CD4-positive, alpha-beta T cell (primary cell): ENCODE measurements at regions of chr11 and their contacts with region 1.

Region 1: GRCh38 chr11:76288166-76288980 is 82.1 kb upstream of the WNT11 start:
- DNase-seq: peak in 12 of 14 experiments; percentile 3 to 53 (median 22)
- ATAC-seq: peak; percentile 80
- H3K4me3 ChIP-seq: peak overlapping the region; percentile 7
- H3K4me3 Mint-ChIP-seq: peak overlapping the region; percentile 75
- H3K27ac ChIP-seq: peak overlapping the region; percentile 60 to 81
- H3K27ac Mint-ChIP-seq: peak overlapping the region; percentile 91
- H3K4me1 ChIP-seq: peaks cover 37% of the 10 kb centered on the region
- H3K4me1 Mint-ChIP-seq: peaks cover 41% of the 10 kb centered on the region
- H3K27me3 ChIP-seq: no peaks in the 10 kb centered on the region
- H3K27me3 Mint-ChIP-seq: no peaks in the 10 kb centered on the region
- CTCF ChIP-seq: no peak

Region 2: GRCh38 chr11:75873417-75874221 is 414.8 kb before region 1 on chr11:
- CTCF ChIA-PET with region 1: no interaction called
- POLR2A ChIA-PET with region 1: no interaction called
- intact Hi-C with region 1: no loop called
- DNase-seq: peak in 1 of 14 experiments; percentile 14
- ATAC-seq: no peak
- H3K4me3 ChIP-seq: no peak overlapping the region
- H3K4me3 Mint-ChIP-seq: no peak overlapping the region
- H3K27ac ChIP-seq: no peak overlapping the region
- H3K27ac Mint-ChIP-seq: no peak overlapping the region
- H3K4me1 ChIP-seq: peaks cover 3% of the 10 kb centered on the region
- H3K4me1 Mint-ChIP-seq: peaks cover 14% of the 10 kb centered on the region
- H3K27me3 ChIP-seq: no peaks in the 10 kb centered on the region
- H3K27me3 Mint-ChIP-seq: no peaks in the 10 kb centered on the region
- CTCF ChIP-seq: no peak

Region 3: DNA sequence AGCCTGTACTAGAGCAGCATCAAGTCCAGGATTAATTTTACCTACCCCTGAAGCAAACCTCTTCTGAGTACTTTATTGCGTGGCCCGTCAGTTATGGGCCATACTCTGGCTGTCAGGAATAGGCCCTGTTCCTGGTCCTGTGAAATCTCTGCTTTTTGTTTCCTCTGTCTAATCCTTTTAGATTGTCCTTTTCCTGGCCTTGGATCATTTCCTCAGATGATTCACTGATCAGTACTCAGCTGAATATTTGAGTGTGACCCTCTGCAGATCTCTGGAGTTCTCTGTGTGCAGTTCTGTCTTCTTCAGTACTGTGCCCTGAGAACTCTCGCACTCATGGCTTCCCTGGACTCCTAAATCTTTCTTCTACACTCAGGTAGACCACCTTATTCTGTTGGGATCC is 349.8 kb before region 1 on chr11:
- CTCF ChIA-PET with region 1: no interaction called
- POLR2A ChIA-PET with region 1: no interaction called
- intact Hi-C with region 1: no loop called
- DNase-seq: no peak
- ATAC-seq: no peak
- H3K4me3 ChIP-seq: no peak overlapping the region
- H3K4me3 Mint-ChIP-seq: no peak overlapping the region
- H3K27ac ChIP-seq: no peak overlapping the region
- H3K27ac Mint-ChIP-seq: no peak overlapping the region
- H3K4me1 ChIP-seq: no peaks in the 10 kb centered on the region
- H3K4me1 Mint-ChIP-seq: no peaks in the 10 kb centered on the region
- H3K27me3 ChIP-seq: no peaks in the 10 kb centered on the region
- H3K27me3 Mint-ChIP-seq: no peaks in the 10 kb centered on the region
- CTCF ChIP-seq: no peak

Region 4: DNA sequence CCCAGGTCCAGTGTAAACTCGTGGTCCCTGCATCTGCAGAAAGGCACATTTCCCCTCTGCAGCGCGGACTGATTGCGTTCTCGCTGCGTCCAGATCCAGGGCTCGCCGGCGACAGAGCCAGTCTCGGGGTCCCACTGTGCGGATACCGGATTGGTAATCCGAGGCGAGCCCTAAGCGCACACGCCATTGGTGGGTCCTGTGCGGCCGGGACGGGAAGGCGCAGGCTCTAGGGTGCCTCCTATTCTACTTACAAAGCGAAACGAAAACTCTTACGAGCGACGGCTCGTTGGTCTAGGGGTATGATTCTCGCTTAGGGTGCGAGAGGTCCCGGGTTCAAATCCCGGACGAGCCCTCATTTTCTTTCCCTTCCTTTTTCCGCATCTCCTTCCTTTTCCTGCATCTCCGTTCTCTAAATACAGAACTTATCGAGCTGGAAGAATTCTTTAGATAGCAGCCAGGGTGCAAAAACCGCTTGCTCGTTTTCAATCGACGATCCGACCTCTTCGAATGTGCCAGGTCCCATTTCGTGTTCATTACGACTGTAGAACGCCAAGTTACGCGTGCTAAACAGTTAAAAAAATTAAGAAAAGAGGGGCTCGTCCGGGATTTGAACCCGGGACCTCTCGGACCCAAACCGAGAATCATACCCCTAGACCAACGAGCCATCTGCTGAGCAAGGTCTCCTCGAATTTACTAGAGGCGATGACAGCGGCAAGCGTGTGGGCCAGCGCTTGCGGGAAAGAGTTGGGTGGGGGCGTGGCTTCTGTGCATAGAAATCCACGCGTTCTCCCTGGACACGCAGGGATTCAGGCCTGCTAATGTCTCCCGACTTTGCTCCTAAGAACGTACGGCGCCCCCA is 52.9 kb before region 1 on chr11:
- CTCF ChIA-PET with region 1: no interaction called
- POLR2A ChIA-PET with region 1: interaction called, 17 read pairs
- intact Hi-C with region 1: loop called in 1 of 2 experiments (anchors 5 kb)
- DNase-seq: peak; percentile 82 to 96 (median 90)
- ATAC-seq: peak; percentile 77
- H3K4me3 ChIP-seq: peak overlapping the region; percentile 84
- H3K4me3 Mint-ChIP-seq: peak overlapping the region; percentile 100
- H3K27ac ChIP-seq: peak overlapping the region; percentile 10 to 37
- H3K27ac Mint-ChIP-seq: peak overlapping the region; percentile 99
- H3K4me1 ChIP-seq: peaks cover 58% of the 10 kb centered on the region
- H3K4me1 Mint-ChIP-seq: peaks cover 54% of the 10 kb centered on the region
- H3K27me3 ChIP-seq: no peaks in the 10 kb centered on the region
- H3K27me3 Mint-ChIP-seq: peaks cover 18% of the 10 kb centered on the region
- CTCF ChIP-seq: no peak

Region 5: DNA sequence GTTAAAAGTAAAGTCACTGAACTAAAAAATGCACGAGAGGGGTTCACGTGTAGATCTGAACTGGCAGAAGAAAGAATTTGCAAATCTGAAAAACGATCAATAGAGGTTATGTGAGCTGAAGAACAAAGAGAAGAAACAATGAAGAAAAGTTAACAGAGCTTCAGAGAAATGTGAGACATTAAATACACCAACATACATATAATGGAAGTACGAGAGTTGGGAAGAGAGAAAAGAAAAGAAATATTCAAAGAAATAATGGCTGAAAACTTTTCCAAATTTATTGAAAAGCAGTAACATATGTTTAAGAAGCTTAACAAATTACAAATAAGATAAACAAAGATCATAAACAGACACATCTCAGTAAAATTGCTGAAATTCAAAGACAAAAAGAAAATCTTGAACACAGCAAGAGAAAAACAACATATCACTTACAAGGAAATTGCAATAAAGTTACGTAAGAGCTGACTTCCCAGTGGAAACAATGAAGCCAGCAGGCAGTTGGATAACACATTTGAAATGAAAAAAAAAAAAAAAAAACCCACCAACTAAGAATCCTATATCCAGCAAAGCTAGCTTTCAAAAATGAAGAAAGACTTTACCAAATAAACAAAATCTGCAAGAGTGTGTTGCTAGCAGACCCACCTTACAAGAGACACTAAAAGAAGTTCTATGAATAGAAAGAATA is 213.3 kb after region 1 on chr11:
- CTCF ChIA-PET with region 1: no interaction called
- POLR2A ChIA-PET with region 1: no interaction called
- intact Hi-C with region 1: no loop called
- DNase-seq: no peak
- ATAC-seq: no peak
- H3K4me3 ChIP-seq: no peak overlapping the region
- H3K4me3 Mint-ChIP-seq: no peak overlapping the region
- H3K27ac ChIP-seq: no peak overlapping the region
- H3K27ac Mint-ChIP-seq: no peak overlapping the region
- H3K4me1 ChIP-seq: no peaks in the 10 kb centered on the region
- H3K4me1 Mint-ChIP-seq: no peaks in the 10 kb centered on the region
- H3K27me3 ChIP-seq: no peaks in the 10 kb centered on the region
- H3K27me3 Mint-ChIP-seq: no peaks in the 10 kb centered on the region
- CTCF ChIP-seq: no peak